ENCODE measurements at regions of chr14 and their contacts with region 1.

Region 1: DNA sequence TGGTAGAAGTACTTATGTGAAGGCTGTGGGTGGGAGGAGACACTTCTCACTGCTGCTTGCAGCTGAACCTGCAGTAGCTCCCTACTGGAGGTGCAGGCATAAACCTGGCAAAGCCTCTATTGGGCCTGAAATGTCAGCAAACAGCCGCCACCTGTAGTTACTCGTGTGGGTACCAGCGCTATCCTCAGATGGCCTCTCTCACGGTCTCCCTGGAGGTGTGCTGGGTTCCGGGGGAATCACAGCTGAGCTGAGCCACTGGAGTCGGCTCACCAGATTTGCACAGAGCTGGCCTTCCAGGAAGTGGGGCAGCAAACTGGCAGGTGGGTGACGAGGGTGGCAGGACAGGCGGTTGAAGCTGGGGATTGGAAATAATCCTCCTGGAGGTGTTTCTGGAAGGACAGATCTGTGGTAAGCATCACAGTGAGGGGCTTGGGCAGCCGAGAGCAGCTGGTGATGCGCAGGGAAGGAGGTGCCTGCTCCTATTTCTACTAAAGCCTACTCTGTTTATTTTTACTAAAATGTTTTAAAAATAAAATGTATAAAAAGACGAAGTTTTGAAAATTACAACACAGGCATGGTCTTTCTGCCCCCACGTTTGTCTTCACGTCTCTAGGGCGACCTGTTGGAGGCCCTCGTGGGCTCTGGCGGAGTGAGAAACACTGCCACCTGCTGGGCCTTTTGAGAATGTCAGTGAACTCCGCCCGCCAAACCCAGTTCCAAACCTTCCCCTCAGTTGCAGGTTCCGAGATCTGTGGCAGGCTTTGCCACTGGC is 67.8 kb upstream of the PLEKHG3 start:
- DNase-seq: no peak
- H3K4me3 ChIP-seq: no peak overlapping the region
- H3K27ac ChIP-seq: no peak overlapping the region
- H3K4me1 ChIP-seq: peaks cover 10% of the 10 kb centered on the region
- H3K27me3 ChIP-seq: no peaks in the 10 kb centered on the region
- CTCF ChIP-seq: peak; percentile 80 to 81 (median 81)
- POLR2A ChIP-seq: no peak

Region 2: DNA sequence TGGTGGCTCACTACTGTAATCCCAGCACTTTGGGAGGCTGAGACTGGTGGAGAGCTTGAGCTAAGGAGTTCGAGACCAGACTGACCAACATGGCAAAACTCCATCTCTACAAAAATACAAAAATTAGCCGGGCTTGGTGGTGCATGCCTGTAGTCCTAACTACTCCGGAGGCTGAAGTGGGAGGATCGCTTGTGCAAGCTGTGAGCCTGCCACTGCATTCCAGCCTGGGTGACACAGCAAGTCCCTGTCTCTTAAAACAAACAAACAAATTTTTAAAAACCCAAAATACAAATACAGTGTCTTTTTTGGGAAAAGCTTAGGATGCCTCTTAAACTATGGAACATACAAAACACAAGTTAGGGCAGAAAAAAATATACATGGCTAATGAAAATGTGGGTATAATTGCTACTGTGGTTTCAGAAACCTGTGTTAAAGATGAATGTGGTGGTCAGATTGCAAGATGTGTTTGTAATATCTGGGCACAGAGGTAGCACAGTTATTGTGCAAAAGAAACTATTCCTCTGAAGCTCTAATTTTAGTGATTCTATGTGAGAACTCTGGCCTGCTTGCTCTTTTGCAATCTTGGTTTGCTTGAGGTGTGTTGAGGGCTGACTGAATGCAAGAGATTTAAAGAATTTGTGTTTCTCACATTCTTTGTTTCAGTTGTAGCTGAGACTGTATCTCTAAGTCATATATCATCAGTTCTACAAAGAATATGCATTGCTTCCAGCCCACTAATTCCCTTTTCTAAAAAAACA is 99.7 kb before region 1 on chr14:
- intact Hi-C with region 1: loop called (anchors 10 kb)
- DNase-seq: no peak
- H3K4me3 ChIP-seq: no peak overlapping the region
- H3K27ac ChIP-seq: no peak overlapping the region
- H3K4me1 ChIP-seq: peaks cover 19% of the 10 kb centered on the region
- H3K27me3 ChIP-seq: no peaks in the 10 kb centered on the region
- CTCF ChIP-seq: no peak
- POLR2A ChIP-seq: no peak

Measured in vagina (tissue), 2 donors.